Naive thymus-derived CD4-positive, alpha-beta T cell (primary cell): ENCODE measurements at regions of chr2 and their contacts with region 1.

Region 1: GRCh38 chr2:206800506-206801417 is 35.4 kb downstream of the FASTKD2 start:
- DNase-seq: peak in 8 of 9 donors; percentile 20 to 61 (median 53)
- ATAC-seq: peak; percentile 67
- H3K4me3 ChIP-seq: no peak overlapping the region
- H3K4me3 Mint-ChIP-seq: peak overlapping the region; percentile 52 to 85 (median 79)
- H3K27ac ChIP-seq: peak overlapping the region; percentile 23
- H3K27ac Mint-ChIP-seq: peak overlapping the region; percentile 1 to 86 (median 37)
- H3K4me1 ChIP-seq: peaks cover 0 to 4% of the 10 kb centered on the region in 2 donors
- H3K4me1 Mint-ChIP-seq: peaks cover 15 to 32% (median 24%) of the 10 kb centered on the region in 7 donors
- H3K27me3 ChIP-seq: no peaks in the 10 kb centered on the region
- H3K27me3 Mint-ChIP-seq: no peaks in the 10 kb centered on the region

Region 2: DNA sequence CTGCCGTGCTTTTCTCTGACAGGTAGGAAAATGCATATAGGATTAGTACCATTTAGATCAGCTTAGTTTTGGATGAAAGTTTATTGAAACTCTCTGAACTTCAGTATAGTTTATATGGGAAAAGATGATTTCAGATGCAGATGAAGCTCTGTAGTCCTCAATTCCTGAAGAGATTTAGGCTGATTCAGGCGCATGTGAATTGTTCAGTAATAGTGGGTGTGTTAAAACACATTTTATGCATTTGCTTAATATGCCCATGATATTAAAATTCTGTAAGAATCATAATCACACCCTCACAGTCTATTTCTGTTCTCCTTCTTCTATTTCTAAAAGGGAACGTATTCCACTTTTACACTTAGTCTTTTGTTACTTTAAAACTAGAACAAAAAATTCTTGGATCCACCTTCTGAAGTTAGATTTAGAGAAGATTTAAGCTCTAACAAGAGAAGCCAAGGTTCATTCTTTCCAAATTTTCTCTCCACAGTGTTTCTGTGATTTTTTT is 203.0 kb before region 1 on chr2:
- CTCF ChIA-PET with region 1: no interaction called
- POLR2A ChIA-PET with region 1: no interaction called
- intact Hi-C with region 1: no loop called
- DNase-seq: no peak
- ATAC-seq: no peak
- H3K4me3 ChIP-seq: no peak overlapping the region
- H3K4me3 Mint-ChIP-seq: no peak overlapping the region
- H3K27ac ChIP-seq: no peak overlapping the region
- H3K27ac Mint-ChIP-seq: no peak overlapping the region
- H3K4me1 ChIP-seq: no peaks in the 10 kb centered on the region
- H3K4me1 Mint-ChIP-seq: peaks cover 0 to 6% (median 0%) of the 10 kb centered on the region in 7 donors
- H3K27me3 ChIP-seq: no peaks in the 10 kb centered on the region
- H3K27me3 Mint-ChIP-seq: peaks cover 0 to 4% (median 0%) of the 10 kb centered on the region in 5 donors

Region 3: DNA sequence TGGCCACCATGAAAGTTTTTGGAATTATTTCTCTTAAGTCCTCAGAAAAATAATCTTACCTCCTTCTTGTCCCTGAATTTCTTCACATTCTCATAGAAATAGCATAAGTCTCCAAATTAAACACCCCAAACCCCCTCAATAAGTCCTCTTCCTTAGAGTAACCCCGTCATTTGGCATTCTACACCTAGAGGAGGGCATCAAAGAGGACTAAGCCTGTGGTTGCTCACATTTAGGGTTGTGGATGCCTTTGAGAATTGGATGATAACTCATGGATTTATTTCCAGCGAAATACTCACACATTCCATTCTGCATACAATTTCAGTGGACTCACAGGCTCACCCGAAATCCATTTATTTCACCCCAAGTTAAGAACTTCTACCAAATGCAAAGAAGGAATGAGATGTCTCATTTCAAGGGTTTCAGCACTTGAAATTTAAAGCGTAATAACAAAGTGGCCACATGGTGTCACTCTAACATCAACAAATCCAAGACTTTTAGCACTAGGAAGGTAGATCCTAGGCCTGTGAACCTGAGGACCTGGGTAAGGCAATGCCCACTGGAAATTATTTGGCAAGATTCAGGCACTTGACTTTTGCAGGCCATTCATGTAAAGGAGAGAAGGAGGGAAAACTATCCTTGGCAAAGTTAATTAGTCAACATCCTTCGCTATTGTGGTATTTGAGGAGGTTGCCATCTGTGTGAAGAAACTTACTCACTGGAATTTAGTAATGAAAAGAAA is 107.2 kb before region 1 on chr2:
- CTCF ChIA-PET with region 1: interaction called, 3 read pairs
- POLR2A ChIA-PET with region 1: no interaction called
- intact Hi-C with region 1: loop called (anchors 2 to 5 kb)
- DNase-seq: peak in 7 of 9 donors; percentile 11 to 56 (median 41)
- ATAC-seq: peak; percentile 75
- H3K4me3 ChIP-seq: no peak overlapping the region
- H3K4me3 Mint-ChIP-seq: no peak overlapping the region
- H3K27ac ChIP-seq: no peak overlapping the region
- H3K27ac Mint-ChIP-seq: no peak overlapping the region
- H3K4me1 ChIP-seq: no peaks in the 10 kb centered on the region
- H3K4me1 Mint-ChIP-seq: peaks cover 0 to 4% (median 0%) of the 10 kb centered on the region in 7 donors
- H3K27me3 ChIP-seq: no peaks in the 10 kb centered on the region
- H3K27me3 Mint-ChIP-seq: peaks cover 0 to 7% (median 0%) of the 10 kb centered on the region in 5 donors

Region 4: DNA sequence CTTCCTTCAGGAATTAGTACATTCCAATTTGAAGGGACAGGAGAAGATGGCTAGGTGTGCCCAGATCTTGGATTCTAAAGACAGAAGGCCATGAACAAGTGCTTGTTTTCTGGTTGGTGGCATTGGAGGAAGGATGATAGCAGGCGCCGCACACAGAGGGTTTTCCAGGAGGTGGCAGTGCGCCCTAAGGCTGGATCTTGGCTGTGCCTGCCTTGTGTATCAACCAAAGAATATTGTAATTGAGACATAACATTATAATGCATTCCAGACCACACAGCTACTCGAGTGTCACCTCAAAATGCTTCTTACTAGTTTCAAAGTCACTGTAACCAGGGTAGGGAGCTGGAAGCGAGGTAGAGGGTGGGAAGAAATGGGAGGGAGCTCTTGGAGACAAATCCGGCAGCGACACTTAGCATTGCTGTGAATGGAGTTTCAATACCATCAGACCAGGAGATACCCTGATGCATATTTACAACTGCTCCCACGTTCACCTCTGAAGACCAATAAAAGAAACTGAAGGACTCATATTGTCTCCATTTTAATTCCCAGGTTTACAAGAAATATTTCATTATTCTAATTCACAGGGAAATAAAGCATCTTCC is 181.1 kb after region 1 on chr2:
- CTCF ChIA-PET with region 1: interaction called, 3 read pairs
- POLR2A ChIA-PET with region 1: no interaction called
- intact Hi-C with region 1: loop called in 1 of 2 experiments (anchors 2 kb)
- DNase-seq: peak; percentile 12 to 61 (median 39)
- ATAC-seq: peak; percentile 67
- H3K4me3 ChIP-seq: no peak overlapping the region
- H3K4me3 Mint-ChIP-seq: no peak overlapping the region
- H3K27ac ChIP-seq: no peak overlapping the region
- H3K27ac Mint-ChIP-seq: peak overlapping the region in 2 of 9 donors; percentile 46 to 63
- H3K4me1 ChIP-seq: peaks cover 0 to 7% of the 10 kb centered on the region in 2 donors
- H3K4me1 Mint-ChIP-seq: peaks cover 0 to 25% (median 11%) of the 10 kb centered on the region in 7 donors
- H3K27me3 ChIP-seq: no peaks in the 10 kb centered on the region
- H3K27me3 Mint-ChIP-seq: peaks cover 0 to 6% (median 0%) of the 10 kb centered on the region in 5 donors

Region 5: DNA sequence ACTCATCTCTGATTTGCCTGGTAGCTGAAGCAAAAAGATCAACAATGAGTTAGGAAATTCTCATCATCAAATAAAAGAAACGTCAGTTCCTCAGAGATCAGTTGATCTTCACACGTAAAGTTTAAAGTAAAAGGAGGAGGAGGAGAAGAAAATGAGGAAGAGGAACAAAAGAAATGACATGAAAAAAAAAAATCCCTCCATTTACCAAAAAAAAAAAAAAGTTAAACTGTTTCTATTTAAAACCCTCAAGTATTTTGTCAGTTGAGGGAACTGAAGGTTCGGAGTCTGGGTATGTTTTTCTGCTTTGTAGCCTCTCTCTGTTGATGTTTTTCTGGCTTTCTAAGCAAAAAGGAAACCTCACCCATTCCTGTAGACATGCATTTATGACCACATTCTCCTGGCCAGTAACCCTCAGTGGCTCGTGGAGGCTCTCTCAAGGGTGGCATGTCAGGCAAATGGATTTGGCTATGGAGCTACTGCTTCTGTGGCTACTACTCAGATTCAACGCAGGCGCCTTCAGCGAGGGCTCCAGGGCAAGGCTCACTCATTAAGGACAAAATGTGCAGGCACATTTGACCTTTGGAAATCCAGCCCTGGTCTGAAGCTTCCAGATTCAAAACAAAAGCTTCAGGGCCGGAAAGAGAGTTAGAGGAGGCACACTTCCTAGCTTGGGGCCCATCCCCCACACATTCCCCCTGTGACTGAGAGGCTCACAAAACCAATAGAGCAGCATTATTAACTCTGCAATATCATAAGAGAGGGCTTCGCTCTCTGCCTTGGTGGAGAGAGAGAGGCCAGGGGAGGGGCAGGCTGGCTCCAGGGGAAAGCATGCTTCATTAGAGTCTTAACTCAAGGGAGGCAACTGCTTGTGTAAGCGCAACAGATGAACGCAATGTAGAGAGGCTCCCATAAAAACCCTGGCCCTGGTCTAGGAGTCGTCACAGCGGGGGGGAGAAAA is 342.7 kb after region 1 on chr2:
- CTCF ChIA-PET with region 1: interaction called, 4 read pairs
- POLR2A ChIA-PET with region 1: no interaction called
- intact Hi-C with region 1: loop called in 1 of 2 experiments (anchors 2 kb)
- DNase-seq: peak; percentile 34 to 92 (median 83)
- ATAC-seq: peak; percentile 83
- H3K4me3 ChIP-seq: peak overlapping the region; percentile 57
- H3K4me3 Mint-ChIP-seq: peak overlapping the region; percentile 59 to 90 (median 80)
- H3K27ac ChIP-seq: peak overlapping the region; percentile 86
- H3K27ac Mint-ChIP-seq: peak overlapping the region; percentile 92 to 99 (median 96)
- H3K4me1 ChIP-seq: peaks cover 17 to 51% of the 10 kb centered on the region in 2 donors
- H3K4me1 Mint-ChIP-seq: peaks cover 45 to 95% (median 87%) of the 10 kb centered on the region in 7 donors
- H3K27me3 ChIP-seq: no peaks in the 10 kb centered on the region
- H3K27me3 Mint-ChIP-seq: no peaks in the 10 kb centered on the region

Region 6: GRCh38 chr2:207473049-207473930 is 672.5 kb after region 1 on chr2:
- CTCF ChIA-PET with region 1: interaction called, 43 read pairs
- POLR2A ChIA-PET with region 1: interaction called, 6 read pairs
- intact Hi-C with region 1: loop called (anchors 1 kb)
- DNase-seq: peak in 8 of 9 donors; percentile 25 to 68 (median 52)
- ATAC-seq: peak; percentile 76
- H3K4me3 ChIP-seq: no peak overlapping the region
- H3K4me3 Mint-ChIP-seq: peak overlapping the region in 4 of 10 donors; percentile 20 to 52 (median 42)
- H3K27ac ChIP-seq: no peak overlapping the region
- H3K27ac Mint-ChIP-seq: peak overlapping the region in 7 of 9 donors; percentile 14 to 71 (median 48)
- H3K4me1 ChIP-seq: no peaks in the 10 kb centered on the region
- H3K4me1 Mint-ChIP-seq: peaks cover 6 to 23% (median 18%) of the 10 kb centered on the region in 7 donors
- H3K27me3 ChIP-seq: no peaks in the 10 kb centered on the region
- H3K27me3 Mint-ChIP-seq: peaks cover 0 to 4% (median 0%) of the 10 kb centered on the region in 5 donors

Region 7: GRCh38 chr2:208040199-208041171 is 1239.7 kb after region 1 on chr2:
- CTCF ChIA-PET with region 1: no interaction called
- POLR2A ChIA-PET with region 1: no interaction called
- intact Hi-C with region 1: loop called (anchors 2 to 10 kb)
- DNase-seq: peak; percentile 21 to 67 (median 54)
- ATAC-seq: peak; percentile 77
- H3K4me3 ChIP-seq: no peak overlapping the region
- H3K4me3 Mint-ChIP-seq: no peak overlapping the region
- H3K27ac ChIP-seq: no peak overlapping the region
- H3K27ac Mint-ChIP-seq: peak overlapping the region in 1 of 9 donors; percentile 25
- H3K4me1 ChIP-seq: no peaks in the 10 kb centered on the region
- H3K4me1 Mint-ChIP-seq: no peaks in the 10 kb centered on the region
- H3K27me3 ChIP-seq: no peaks in the 10 kb centered on the region
- H3K27me3 Mint-ChIP-seq: peaks cover 0 to 10% (median 5%) of the 10 kb centered on the region in 5 donors